CD4-positive, alpha-beta memory T cell (primary cell): ENCODE measurements at regions of chr1 and their contacts with region 1.

Region 1: DNA sequence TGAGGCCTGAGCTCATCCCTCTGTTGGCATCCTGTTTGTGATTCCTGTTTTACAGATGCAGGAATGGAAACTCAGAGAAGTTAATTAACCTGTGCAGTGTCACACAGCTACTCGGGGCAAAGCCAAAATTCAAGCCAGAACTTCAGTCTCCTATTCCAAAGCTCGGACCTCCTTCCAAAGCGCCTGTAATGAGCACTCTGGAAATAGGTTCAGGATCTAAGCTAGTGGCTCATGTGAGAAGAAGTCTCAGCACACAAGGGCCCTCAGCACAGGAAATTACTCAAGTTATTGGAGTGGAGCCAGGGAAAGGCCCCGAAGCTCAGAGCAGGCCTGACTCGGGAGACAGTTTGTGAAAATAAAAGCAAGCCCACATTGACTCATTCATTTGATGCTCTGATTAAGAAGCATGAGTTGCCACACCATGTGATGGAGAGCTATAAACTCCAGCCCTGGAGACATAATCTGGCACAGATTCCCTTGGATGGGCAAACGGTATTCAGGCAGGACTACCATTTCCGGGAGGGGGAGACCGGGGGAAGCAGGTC is 50.6 kb upstream of the LYST start:
- DNase-seq: peak; percentile 51 to 84 (median 65)
- H3K4me3 ChIP-seq: no peak overlapping the region
- H3K4me3 Mint-ChIP-seq: peak overlapping the region in 4 of 8 donors; percentile 7 to 72 (median 28)
- H3K27ac ChIP-seq: peak overlapping the region; percentile 3
- H3K27ac Mint-ChIP-seq: peak overlapping the region; percentile 66 to 95 (median 90)
- H3K4me1 ChIP-seq: peaks cover 9% of the 10 kb centered on the region
- H3K4me1 Mint-ChIP-seq: peaks cover 17 to 34% (median 19%) of the 10 kb centered on the region in 4 donors
- H3K27me3 ChIP-seq: no peaks in the 10 kb centered on the region
- H3K27me3 Mint-ChIP-seq: no peaks in the 10 kb centered on the region

Region 2: GRCh38 chr1:235954306-235955283 is 37.3 kb after region 1 on chr1:
- CTCF ChIA-PET with region 1: no interaction called
- POLR2A ChIA-PET with region 1: interaction called, 7 read pairs
- intact Hi-C with region 1: loop called (anchors 5 kb)
- DNase-seq: peak; percentile 34 to 65 (median 43)
- H3K4me3 ChIP-seq: no peak overlapping the region
- H3K4me3 Mint-ChIP-seq: peak overlapping the region; percentile 15 to 69 (median 52)
- H3K27ac ChIP-seq: no peak overlapping the region
- H3K27ac Mint-ChIP-seq: peak overlapping the region; percentile 67 to 85 (median 79)
- H3K4me1 ChIP-seq: peaks cover 34% of the 10 kb centered on the region
- H3K4me1 Mint-ChIP-seq: peaks cover 33 to 39% (median 36%) of the 10 kb centered on the region in 4 donors
- H3K27me3 ChIP-seq: no peaks in the 10 kb centered on the region
- H3K27me3 Mint-ChIP-seq: no peaks in the 10 kb centered on the region